CD4-positive, alpha-beta T cell (primary cell): ENCODE measurements at regions of chr1 and their contacts with region 1.

Region 1: DNA sequence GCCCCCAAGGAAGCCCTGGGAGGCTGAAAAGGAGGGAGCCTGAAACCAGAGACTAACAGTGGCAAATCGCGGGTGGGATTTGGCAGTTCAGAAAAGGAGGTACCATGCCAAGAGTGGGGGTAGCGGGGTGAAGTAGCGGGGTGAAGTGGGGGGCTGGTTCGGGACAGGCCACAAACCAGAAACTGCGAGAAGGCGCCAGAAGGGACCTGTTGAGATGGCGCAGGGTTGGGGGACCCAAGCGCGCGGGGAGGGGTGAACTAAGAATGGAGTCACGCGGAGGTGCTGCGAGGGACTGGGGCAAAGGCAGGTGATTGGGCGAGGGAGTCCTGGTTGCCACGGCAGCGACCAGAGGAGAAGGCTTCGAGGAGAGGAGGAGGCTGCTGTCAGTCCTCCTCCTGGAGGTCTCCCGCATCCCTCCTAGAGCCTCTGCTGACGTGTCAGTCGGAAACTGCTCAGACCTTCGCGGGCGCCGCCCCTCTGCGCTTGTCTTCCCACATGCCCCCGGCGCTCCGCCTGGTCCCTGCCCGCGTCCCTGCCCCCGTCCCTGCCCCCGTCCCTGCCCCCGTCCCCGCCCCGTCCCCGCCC is 438 bp upstream of the MIA3 start:
- DNase-seq: peak; percentile 85 to 99 (median 90)
- ATAC-seq: peak; percentile 90
- H3K4me3 ChIP-seq: peak overlapping the region; percentile 69
- H3K4me3 Mint-ChIP-seq: peak overlapping the region; percentile 94
- H3K27ac ChIP-seq: peak overlapping the region; percentile 43 to 80
- H3K27ac Mint-ChIP-seq: peak overlapping the region; percentile 92
- H3K4me1 ChIP-seq: peaks cover 18% of the 10 kb centered on the region
- H3K4me1 Mint-ChIP-seq: peaks cover 40% of the 10 kb centered on the region
- H3K27me3 ChIP-seq: peaks cover 0 to 6% of the 10 kb centered on the region in 2 experiments
- H3K27me3 Mint-ChIP-seq: peaks cover 34% of the 10 kb centered on the region
- CTCF ChIP-seq: no peak

Region 2: GRCh38 chr1:222589462-222590302 is 27.8 kb before region 1 on chr1 and contains the start of gene TAF1A:
- CTCF ChIA-PET with region 1: interaction called, 5 read pairs
- POLR2A ChIA-PET with region 1: interaction called, 15 read pairs
- intact Hi-C with region 1: loop called (anchors 1 to 2 kb)
- DNase-seq: peak; percentile 74 to 93 (median 82)
- ATAC-seq: peak; percentile 99
- H3K4me3 ChIP-seq: peak within 1 kb of the TSS; percentile 74
- H3K4me3 Mint-ChIP-seq: peak within 1 kb of the TSS; percentile 97
- H3K27ac ChIP-seq: peak within 1 kb of the TSS; percentile 67 to 76
- H3K27ac Mint-ChIP-seq: peak within 1 kb of the TSS; percentile 99
- H3K4me1 ChIP-seq: peaks cover 14% of the 10 kb centered on the region
- H3K4me1 Mint-ChIP-seq: peaks cover 55% of the 10 kb centered on the region
- H3K27me3 ChIP-seq: no peaks in the 10 kb centered on the region
- H3K27me3 Mint-ChIP-seq: no peaks in the 10 kb centered on the region
- CTCF ChIP-seq: no peak
- total RNA-seq, gene TAF1A: 3.3 to 4.1 TPM

Region 3: DNA sequence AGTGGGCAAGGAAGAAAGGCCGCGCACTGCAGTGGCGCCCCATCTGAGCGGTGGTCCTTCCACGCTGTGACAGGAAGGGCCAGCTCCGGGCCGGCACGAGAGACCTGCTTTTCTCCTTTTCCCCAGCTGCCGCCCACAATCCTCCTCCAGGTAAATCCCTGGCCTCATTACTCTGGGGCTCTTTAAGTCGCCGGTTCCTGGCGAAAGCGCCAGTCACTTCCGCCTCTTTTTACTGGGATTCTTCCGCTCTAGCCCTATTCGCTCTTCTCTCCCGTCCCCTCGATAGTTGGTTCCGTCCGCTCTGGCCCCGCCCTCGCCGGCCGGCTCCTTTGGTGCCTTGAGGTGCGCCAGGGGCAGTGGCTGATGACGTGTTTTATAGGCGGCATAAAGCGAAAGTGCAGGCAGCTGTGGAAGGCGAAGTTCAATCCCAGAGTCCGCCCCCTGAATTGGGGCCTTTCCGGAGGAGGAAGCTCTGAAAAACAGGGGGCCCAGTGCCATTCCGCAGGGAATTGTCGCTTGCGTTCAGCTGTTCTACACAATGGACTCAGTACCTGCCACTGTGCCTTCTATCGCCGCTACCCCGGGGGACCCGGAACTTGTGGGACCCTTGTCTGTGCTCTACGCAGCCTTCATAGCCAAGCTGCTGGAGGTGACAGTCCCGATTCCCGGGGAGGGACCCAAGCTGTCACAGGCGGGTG is 26.6 kb after region 1 on chr1:
- CTCF ChIA-PET with region 1: no interaction called
- POLR2A ChIA-PET with region 1: interaction called, 19 read pairs
- intact Hi-C with region 1: loop called in 1 of 2 experiments (anchors 1 kb)
- DNase-seq: peak; percentile 91 to 99 (median 96)
- ATAC-seq: peak; percentile 83
- H3K4me3 ChIP-seq: peak overlapping the region; percentile 73
- H3K4me3 Mint-ChIP-seq: peak overlapping the region; percentile 94
- H3K27ac ChIP-seq: peak overlapping the region; percentile 95 to 97
- H3K27ac Mint-ChIP-seq: peak overlapping the region; percentile 99
- H3K4me1 ChIP-seq: peaks cover 20% of the 10 kb centered on the region
- H3K4me1 Mint-ChIP-seq: peaks cover 44% of the 10 kb centered on the region
- H3K27me3 ChIP-seq: no peaks in the 10 kb centered on the region
- H3K27me3 Mint-ChIP-seq: no peaks in the 10 kb centered on the region
- CTCF ChIP-seq: no peak

Region 4: DNA sequence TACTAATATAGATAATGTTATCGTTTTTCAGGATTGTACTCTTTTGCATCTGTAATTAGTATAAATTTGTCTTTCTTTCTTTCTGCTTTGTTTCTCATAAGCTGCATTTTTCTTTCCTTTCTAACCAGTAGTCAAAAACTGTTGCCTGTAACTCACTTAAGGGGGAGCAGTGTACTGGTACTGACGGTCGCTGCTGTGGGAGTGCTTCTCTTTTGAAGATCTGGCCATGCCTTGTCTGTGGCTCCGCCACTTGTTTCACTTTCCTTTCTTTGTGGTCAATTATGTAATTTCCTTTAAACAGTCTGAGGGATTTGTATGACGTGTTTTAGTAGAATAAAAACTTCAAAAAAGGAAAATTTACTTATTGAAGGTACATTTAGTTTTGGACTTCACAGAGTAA is 37.4 kb after region 1 on chr1:
- CTCF ChIA-PET with region 1: no interaction called
- POLR2A ChIA-PET with region 1: no interaction called
- intact Hi-C with region 1: loop called (anchors 5 kb)
- DNase-seq: peak; percentile 50 to 95 (median 64)
- ATAC-seq: peak; percentile 98
- H3K4me3 ChIP-seq: no peak overlapping the region
- H3K4me3 Mint-ChIP-seq: peak overlapping the region; percentile 49
- H3K27ac ChIP-seq: peak overlapping the region; percentile 77 to 90
- H3K27ac Mint-ChIP-seq: peak overlapping the region; percentile 87
- H3K4me1 ChIP-seq: peaks cover 25% of the 10 kb centered on the region
- H3K4me1 Mint-ChIP-seq: peaks cover 54% of the 10 kb centered on the region
- H3K27me3 ChIP-seq: no peaks in the 10 kb centered on the region
- H3K27me3 Mint-ChIP-seq: no peaks in the 10 kb centered on the region
- CTCF ChIP-seq: peak; percentile 45

Region 5: DNA sequence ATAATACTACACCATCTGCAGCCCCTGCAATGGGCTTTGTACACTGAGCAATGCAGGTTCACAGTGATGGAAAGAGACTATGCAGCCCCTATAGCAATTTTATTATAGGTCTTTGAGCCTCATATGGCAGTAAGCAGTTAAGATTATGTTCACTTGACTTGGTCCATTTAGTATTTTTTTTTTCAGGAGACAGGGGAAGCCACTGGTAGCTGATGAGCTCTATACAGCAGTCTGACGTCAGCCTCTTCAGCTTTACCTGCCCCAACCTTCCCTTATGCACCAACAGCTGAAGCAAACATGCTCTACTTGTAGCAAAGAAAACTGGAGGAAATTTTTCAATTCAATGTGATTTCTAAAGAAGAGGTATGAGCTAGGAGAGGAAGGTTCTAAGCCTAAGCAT is 62.6 kb after region 1 on chr1:
- CTCF ChIA-PET with region 1: no interaction called
- POLR2A ChIA-PET with region 1: no interaction called
- intact Hi-C with region 1: no loop called
- DNase-seq: no peak
- ATAC-seq: no peak
- H3K4me3 ChIP-seq: no peak overlapping the region
- H3K4me3 Mint-ChIP-seq: no peak overlapping the region
- H3K27ac ChIP-seq: no peak overlapping the region
- H3K27ac Mint-ChIP-seq: peak overlapping the region; percentile 47
- H3K4me1 ChIP-seq: no peaks in the 10 kb centered on the region
- H3K4me1 Mint-ChIP-seq: no peaks in the 10 kb centered on the region
- H3K27me3 ChIP-seq: no peaks in the 10 kb centered on the region
- H3K27me3 Mint-ChIP-seq: no peaks in the 10 kb centered on the region
- CTCF ChIP-seq: no peak

Region 6: DNA sequence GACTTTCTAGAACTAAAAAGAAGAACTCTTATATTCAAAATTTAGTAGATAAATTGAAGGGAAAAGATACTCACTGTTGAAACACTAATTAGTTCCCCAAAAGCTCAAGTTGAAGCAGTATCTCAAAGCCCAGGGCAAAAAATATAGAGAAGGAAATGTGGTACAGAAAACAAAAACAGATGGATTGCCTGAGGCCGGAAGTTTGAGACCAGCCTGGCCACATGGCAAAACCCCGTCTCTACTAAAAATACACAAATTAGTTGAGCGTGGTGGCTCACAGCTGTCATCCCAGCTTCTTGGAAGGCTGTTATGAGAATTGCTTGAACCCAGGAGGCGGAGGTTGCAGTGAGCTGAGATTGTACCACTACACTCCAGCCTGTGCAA is 155.5 kb after region 1 on chr1:
- CTCF ChIA-PET with region 1: no interaction called
- POLR2A ChIA-PET with region 1: no interaction called
- intact Hi-C with region 1: no loop called
- DNase-seq: peak in 1 of 14 experiments; percentile 18
- ATAC-seq: no peak
- H3K4me3 ChIP-seq: no peak overlapping the region
- H3K4me3 Mint-ChIP-seq: peak overlapping the region; percentile 50
- H3K27ac ChIP-seq: no peak overlapping the region
- H3K27ac Mint-ChIP-seq: peak overlapping the region; percentile 80
- H3K4me1 ChIP-seq: peaks cover 13% of the 10 kb centered on the region
- H3K4me1 Mint-ChIP-seq: peaks cover 27% of the 10 kb centered on the region
- H3K27me3 ChIP-seq: no peaks in the 10 kb centered on the region
- H3K27me3 Mint-ChIP-seq: no peaks in the 10 kb centered on the region
- CTCF ChIP-seq: no peak